Colonic mucosa (tissue), 4 donors: ENCODE measurements at regions of chr19 and their contacts with region 1.

Region 1: DNA sequence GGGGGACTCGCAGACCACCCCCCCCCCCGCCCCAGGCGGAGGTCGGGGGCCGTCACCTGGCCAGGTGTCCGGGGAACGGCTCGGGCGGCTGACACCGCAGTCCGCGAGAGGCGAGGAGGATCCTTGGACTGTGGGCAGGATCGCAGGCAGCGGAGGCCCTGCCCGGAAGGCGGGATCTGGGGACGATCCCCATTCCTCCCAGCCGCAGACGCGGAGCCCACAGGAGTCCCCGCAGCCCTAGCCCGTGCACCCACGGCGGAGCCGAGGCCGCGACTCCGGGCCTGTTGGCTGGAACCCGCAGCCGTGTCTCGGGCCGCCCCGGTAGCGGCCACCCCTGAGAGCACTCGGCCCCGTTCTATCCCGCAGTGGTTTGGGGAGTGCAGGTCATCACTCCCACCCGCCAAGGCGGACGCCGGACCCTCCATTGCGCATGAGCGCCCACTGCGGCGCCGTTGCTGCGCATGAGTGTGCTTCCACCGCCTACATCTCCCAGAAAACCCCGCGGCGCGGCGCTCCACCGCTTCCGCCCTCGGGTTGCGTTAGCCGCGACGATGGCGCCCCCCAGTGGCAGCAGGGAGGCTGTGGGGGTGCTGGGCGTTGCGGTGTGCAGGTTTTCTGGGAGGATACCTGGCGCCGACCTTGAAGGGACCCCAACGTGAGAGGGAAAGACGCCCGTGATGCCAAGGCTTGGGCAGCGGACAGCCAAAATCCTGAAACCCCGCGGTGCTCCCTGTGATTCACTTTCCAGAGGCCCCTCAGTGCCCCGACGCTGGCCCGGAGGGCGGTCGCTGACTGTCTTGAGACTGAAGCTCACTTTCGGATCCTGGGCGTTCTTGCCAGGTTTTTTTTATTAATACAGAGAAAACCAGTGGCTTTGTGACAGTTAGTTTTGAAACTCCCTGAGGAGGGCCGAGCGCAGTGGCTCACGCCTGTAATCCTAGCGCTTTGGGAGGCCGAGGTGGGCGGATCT is 4.4 kb upstream of the ZNF329 start:
- DNase-seq: peak; percentile 98
- H3K4me3 ChIP-seq: peak overlapping the region; percentile 72
- H3K27ac ChIP-seq: peak overlapping the region; percentile 70
- H3K4me1 ChIP-seq: no peaks in the 10 kb centered on the region
- H3K27me3 ChIP-seq: no peaks in the 10 kb centered on the region
- CTCF ChIP-seq: peak; percentile 92

Region 2: GRCh38 chr19:56393119-56394012 is 1761.6 kb before region 1 on chr19 and contains the start of gene ZNF582:
- intact Hi-C with region 1: loop called (anchors 10 kb)
- DNase-seq: peak; percentile 94
- H3K4me3 ChIP-seq: peak within 1 kb of the TSS; percentile 70
- H3K27ac ChIP-seq: peak within 1 kb of the TSS; percentile 81
- H3K4me1 ChIP-seq: no peaks in the 10 kb centered on the region
- H3K27me3 ChIP-seq: no peaks in the 10 kb centered on the region
- CTCF ChIP-seq: peak; percentile 56
- total RNA-seq, gene ZNF582: 1.1 to 1.4 TPM

Region 3: GRCh38 chr19:57746580-57747471 is 408.1 kb before region 1 on chr19 and contains the start of gene ZNF776:
- intact Hi-C with region 1: loop called (anchors 10 kb)
- DNase-seq: peak; percentile 86
- H3K4me3 ChIP-seq: peak within 1 kb of the TSS; percentile 88
- H3K27ac ChIP-seq: peak within 1 kb of the TSS; percentile 39
- H3K4me1 ChIP-seq: peaks cover 10% of the 10 kb centered on the region
- H3K27me3 ChIP-seq: no peaks in the 10 kb centered on the region
- CTCF ChIP-seq: no peak
- total RNA-seq, gene ZNF776: 13.5 to 14.5 TPM

Region 4: DNA sequence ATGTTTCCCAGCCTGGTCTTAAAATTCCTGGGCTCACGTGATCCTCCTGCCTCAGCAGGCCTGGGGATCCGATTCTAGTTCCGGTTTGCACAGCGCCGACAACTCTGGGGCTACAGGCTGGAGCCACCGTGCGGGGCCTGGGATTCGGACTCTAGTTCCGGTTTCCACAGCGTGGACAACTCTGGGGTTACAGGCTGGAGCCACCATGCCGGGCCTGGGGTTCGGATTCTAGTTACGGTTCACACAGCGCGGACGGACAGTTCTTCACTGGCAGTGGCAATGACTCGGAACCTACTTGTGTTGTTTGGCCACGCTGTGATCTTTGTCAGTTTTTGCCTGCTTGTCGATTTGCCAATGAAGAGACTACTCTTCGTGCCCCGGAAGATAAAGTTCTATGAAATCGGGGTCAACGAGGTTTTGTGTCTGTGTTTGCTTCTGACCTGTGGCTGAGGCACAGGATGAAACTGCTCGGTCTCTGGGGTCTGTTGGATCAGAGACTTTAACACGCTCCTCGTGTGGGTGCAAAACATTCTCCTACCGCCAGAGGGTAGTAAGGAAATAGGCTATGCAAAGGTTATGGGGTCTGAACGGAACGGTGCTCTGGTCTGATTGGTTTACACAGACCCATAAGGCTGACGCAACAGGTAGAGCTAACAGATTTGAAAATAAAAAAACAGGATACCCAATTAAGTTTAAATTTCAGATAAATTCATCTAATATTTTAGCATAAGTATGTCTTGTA is 133.3 kb before region 1 on chr19:
- intact Hi-C with region 1: loop called (anchors 5 kb)
- DNase-seq: peak; percentile 64
- H3K4me3 ChIP-seq: no peak overlapping the region
- H3K27ac ChIP-seq: no peak overlapping the region
- H3K4me1 ChIP-seq: no peaks in the 10 kb centered on the region
- H3K27me3 ChIP-seq: no peaks in the 10 kb centered on the region
- CTCF ChIP-seq: peak; percentile 25

Region 5: GRCh38 chr19:58097781-58098681 is 56.9 kb before region 1 on chr19 and contains the start of gene ZSCAN18:
- intact Hi-C with region 1: loop called (anchors 2 kb)
- DNase-seq: peak; percentile 95
- H3K4me3 ChIP-seq: peak within 1 kb of the TSS; percentile 90
- H3K27ac ChIP-seq: peak within 1 kb of the TSS; percentile 76
- H3K4me1 ChIP-seq: no peaks in the 10 kb centered on the region
- H3K27me3 ChIP-seq: no peaks in the 10 kb centered on the region
- CTCF ChIP-seq: no peak
- total RNA-seq, gene ZSCAN18: 17.1 to 22.9 TPM